Esophagus squamous epithelium (tissue), 5 donors: ENCODE measurements at regions of chr15 and their contacts with region 1.

Region 1: DNA sequence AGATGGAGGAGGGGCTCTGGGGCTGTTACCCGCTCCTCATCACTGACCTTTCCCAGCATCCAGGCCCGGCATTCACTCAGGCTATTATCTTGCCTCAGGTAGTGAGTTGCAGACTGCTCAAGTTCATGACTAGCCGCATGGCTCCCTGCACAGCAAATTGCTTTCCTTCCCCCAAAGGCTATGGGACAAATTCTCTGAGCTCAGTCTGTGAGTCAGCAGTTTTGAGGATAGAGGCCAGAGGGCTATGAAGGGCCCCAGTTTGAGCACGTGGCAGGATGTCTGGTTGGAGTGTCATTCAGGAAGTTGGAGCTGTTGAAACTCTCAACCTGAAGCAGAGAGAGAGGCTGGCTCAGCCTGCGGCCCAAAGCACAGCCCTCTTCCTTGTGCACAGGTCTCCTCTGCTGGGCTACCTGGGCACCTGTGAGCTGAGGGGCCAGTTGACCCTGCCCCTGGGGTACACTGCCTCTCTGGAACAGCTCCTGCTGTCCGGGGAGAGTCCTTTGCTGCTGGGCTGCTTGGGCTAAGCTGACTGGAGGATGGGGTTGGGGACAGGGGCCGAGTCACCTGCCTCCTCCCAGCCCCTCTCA is 7.9 kb downstream of the FAH start:
- DNase-seq: no peak
- H3K4me3 ChIP-seq: no peak overlapping the region
- H3K27ac ChIP-seq: peak overlapping the region in 3 of 4 donors; percentile 40 to 64 (median 64)
- H3K4me1 ChIP-seq: peaks cover 9 to 24% (median 15%) of the 10 kb centered on the region in 3 donors
- H3K27me3 ChIP-seq: no peaks in the 10 kb centered on the region
- CTCF ChIP-seq: no peak
- POLR2A ChIP-seq: no peak

Region 2: GRCh38 chr15:80059786-80060355 is 100.8 kb before region 1 on chr15:
- intact Hi-C with region 1: loop called (anchors 10 kb)
- DNase-seq: no peak
- H3K4me3 ChIP-seq: peak overlapping the region; percentile 72 to 97 (median 85)
- H3K27ac ChIP-seq: peak overlapping the region; percentile 93 to 99 (median 98)
- H3K4me1 ChIP-seq: peaks cover 8 to 41% (median 22%) of the 10 kb centered on the region in 3 donors
- H3K27me3 ChIP-seq: peaks cover 0 to 4% (median 0%) of the 10 kb centered on the region in 4 donors
- CTCF ChIP-seq: no peak
- POLR2A ChIP-seq: peak in 1 of 4 donors; percentile 51

Region 3: GRCh38 chr15:80317389-80318182 is 156.9 kb after region 1 on chr15:
- intact Hi-C with region 1: no loop called
- DNase-seq: no peak
- H3K4me3 ChIP-seq: no peak overlapping the region
- H3K27ac ChIP-seq: no peak overlapping the region
- H3K4me1 ChIP-seq: no peaks in the 10 kb centered on the region
- H3K27me3 ChIP-seq: peaks cover 0 to 26% (median 0%) of the 10 kb centered on the region in 4 donors
- CTCF ChIP-seq: no peak
- POLR2A ChIP-seq: no peak